ENCODE measurements at regions of chr21 and their contacts with region 1.

Region 1: DNA sequence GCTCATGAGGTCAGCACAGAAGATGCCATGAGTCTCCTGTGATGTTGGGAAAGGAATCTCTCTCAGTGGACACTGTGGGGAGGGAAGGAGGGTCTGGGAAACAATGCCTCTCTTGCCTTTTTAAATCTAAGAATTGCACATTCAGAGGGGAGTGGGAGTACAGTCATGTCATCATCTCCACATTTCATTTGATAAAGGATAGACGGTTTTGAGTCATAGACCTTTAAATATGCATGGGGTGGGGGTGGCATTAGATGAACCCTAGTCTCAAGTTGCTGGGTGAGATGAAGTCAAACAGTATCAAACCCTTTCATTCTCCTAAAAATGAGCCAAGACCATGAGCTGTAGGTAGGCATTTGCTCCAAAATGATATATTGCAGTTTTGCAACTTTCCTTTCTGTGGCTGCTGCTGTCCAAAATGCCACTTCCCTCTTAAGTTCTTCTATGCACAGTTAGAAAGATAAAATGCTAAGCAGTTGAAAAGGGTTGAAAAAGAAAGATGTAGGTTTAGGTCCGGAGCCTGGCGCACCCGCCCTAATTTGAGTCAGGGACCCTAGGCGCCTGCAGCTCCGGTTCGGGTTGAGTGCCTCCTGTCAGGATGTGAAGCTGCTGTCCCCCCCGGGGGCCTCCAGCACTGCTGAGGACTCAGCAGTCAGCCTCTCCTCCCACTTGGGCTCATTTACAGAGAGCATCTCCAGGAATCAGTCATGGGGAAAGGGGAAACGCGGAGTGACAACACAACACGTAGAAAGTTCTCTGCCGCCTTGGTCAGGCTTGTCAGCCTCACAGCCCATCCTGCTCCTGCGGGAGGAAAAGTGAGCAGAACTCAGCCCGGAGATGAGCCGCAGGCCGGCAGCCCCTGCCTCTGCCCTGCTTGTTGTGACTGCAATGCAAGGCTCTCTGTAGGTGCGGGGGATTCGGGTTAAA is 479.3 kb upstream of the RUNX1 start:
- DNase-seq: peak; percentile 57
- ATAC-seq: peak; percentile 68
- H3K4me3 ChIP-seq: peak overlapping the region; percentile 50 to 74 (median 67)
- H3K4me3 Mint-ChIP-seq: peak overlapping the region; percentile 91
- H3K27ac ChIP-seq: peak overlapping the region; percentile 81
- H3K27ac Mint-ChIP-seq: peak overlapping the region; percentile 93
- H3K4me1 ChIP-seq: peaks cover 43 to 45% of the 10 kb centered on the region in 2 donors
- H3K4me1 Mint-ChIP-seq: peaks cover 54% of the 10 kb centered on the region
- H3K27me3 ChIP-seq: no peaks in the 10 kb centered on the region
- H3K27me3 Mint-ChIP-seq: no peaks in the 10 kb centered on the region
- CTCF ChIP-seq: no peak

Region 2: GRCh38 chr21:35438643-35439404 is 89.6 kb before region 1 on chr21:
- CTCF ChIA-PET with region 1: no interaction called
- POLR2A ChIA-PET with region 1: no interaction called
- intact Hi-C with region 1: loop called (anchors 5 kb)
- DNase-seq: peak; percentile 78
- ATAC-seq: peak; percentile 93
- H3K4me3 ChIP-seq: peak overlapping the region in 4 of 5 experiments; percentile 11 to 34 (median 19)
- H3K4me3 Mint-ChIP-seq: peak overlapping the region; percentile 82
- H3K27ac ChIP-seq: peak overlapping the region; percentile 57 to 79
- H3K27ac Mint-ChIP-seq: peak overlapping the region; percentile 89
- H3K4me1 ChIP-seq: peaks cover 16 to 23% of the 10 kb centered on the region in 2 donors
- H3K4me1 Mint-ChIP-seq: peaks cover 40% of the 10 kb centered on the region
- H3K27me3 ChIP-seq: peaks cover 0 to 5% (median 1%) of the 10 kb centered on the region in 4 experiments
- H3K27me3 Mint-ChIP-seq: peaks cover 4% of the 10 kb centered on the region
- CTCF ChIP-seq: no peak

Region 3: DNA sequence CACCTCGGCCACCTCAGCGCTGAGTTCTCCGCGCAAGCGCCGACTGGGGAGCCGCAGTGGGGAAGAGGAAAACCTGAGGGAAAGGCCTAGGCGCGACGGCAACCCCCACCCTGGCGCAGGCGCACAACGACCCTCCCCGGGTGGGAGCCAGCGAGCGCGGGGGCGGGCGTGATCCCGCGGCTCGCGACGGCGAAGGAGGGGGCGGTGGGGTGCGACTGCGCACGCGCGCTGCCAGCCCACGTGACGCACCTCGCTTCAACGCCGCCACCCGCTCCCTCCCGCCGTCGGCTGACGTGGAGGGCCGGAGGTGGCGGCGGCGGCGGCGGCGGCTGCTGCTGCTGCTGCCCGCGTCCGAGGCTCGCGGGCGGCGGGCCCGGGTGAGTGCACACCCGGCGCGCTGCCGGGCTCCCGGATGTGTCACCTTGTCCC is 1544.6 kb after region 1 on chr21 and contains the starts of genes PIGP and TTC3:
- CTCF ChIA-PET with region 1: no interaction called
- POLR2A ChIA-PET with region 1: no interaction called
- intact Hi-C with region 1: no loop called
- DNase-seq: peak; percentile 98
- ATAC-seq: peak; percentile 67
- H3K4me3 ChIP-seq: peak within 1 kb of the TSS; percentile 80 to 92 (median 86)
- H3K4me3 Mint-ChIP-seq: peak within 1 kb of the TSS; percentile 98
- H3K27ac ChIP-seq: peak within 1 kb of the TSS; percentile 98
- H3K27ac Mint-ChIP-seq: peak within 1 kb of the TSS; percentile 99
- H3K4me1 ChIP-seq: peaks cover 22 to 23% of the 10 kb centered on the region in 2 donors
- H3K4me1 Mint-ChIP-seq: peaks cover 46% of the 10 kb centered on the region
- H3K27me3 ChIP-seq: no peaks in the 10 kb centered on the region
- H3K27me3 Mint-ChIP-seq: no peaks in the 10 kb centered on the region
- CTCF ChIP-seq: no peak
- total RNA-seq, gene PIGP: 21.7 and 22.7 TPM in 2 replicates
- total RNA-seq, gene TTC3: 163 and 191 TPM in 2 replicates

Measured in B cell (primary cell).